MCF 10A (cell line): ENCODE measurements at regions of chr1 and their contacts with region 1.

Region 1: GRCh38 chr1:171801487-171801891 is 20.0 kb downstream of the METTL13 start:
- DNase-seq: peak; percentile 73
- H3K4me3 Mint-ChIP-seq: no peak overlapping the region
- H3K27ac Mint-ChIP-seq: no peak overlapping the region
- H3K4me1 Mint-ChIP-seq: no peaks in the 10 kb centered on the region
- H3K27me3 Mint-ChIP-seq: no peaks in the 10 kb centered on the region
- CTCF ChIP-seq: peak; percentile 88

Region 2: DNA sequence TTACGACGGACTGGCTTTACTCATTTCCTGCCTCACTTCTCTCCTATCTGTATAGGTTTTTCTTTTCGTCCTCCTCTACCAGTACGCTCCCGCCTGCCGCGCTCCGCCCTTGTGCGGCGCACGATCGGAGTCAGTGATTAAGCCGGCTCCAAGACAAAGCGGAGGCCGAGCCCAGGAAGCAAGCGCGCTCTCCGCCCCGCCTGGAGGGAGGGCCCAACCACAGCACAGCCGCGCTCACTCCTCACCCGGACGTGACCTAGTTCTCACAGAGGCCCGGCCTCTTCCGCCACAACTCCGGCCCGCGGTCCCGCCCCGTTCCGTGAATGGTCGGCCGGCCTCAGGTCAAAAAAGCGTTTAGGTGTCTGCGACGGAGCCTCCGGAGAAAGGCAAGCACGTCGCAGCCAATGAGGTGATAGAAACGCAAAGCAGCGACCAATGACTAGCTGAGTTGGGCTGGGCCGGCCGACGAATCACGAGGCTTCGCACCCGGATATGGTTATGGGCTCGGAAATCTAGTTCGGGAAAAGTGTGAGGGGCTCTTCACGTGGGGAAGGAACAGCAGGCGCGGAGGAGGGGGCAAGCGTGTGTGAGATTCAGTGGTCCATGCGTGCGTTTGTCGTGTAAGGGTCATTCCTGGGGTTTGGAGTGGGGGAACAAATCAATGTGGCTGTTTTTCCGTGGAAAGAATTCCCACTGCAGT is 20.2 kb before region 1 on chr1 and contains the start of gene METTL13:
- CTCF ChIA-PET with region 1: interaction called, 79 read pairs
- POLR2A ChIA-PET with region 1: interaction called, 11 read pairs
- intact Hi-C with region 1: no loop called
- DNase-seq: peak; percentile 100
- H3K4me3 Mint-ChIP-seq: peak within 1 kb of the TSS; percentile 84
- H3K27ac Mint-ChIP-seq: peak within 1 kb of the TSS; percentile 95
- H3K4me1 Mint-ChIP-seq: peaks cover 28% of the 10 kb centered on the region
- H3K27me3 Mint-ChIP-seq: no peaks in the 10 kb centered on the region
- CTCF ChIP-seq: no peak
- total RNA-seq, gene METTL13: 30.7 and 39.1 TPM in 2 replicates

Region 3: DNA sequence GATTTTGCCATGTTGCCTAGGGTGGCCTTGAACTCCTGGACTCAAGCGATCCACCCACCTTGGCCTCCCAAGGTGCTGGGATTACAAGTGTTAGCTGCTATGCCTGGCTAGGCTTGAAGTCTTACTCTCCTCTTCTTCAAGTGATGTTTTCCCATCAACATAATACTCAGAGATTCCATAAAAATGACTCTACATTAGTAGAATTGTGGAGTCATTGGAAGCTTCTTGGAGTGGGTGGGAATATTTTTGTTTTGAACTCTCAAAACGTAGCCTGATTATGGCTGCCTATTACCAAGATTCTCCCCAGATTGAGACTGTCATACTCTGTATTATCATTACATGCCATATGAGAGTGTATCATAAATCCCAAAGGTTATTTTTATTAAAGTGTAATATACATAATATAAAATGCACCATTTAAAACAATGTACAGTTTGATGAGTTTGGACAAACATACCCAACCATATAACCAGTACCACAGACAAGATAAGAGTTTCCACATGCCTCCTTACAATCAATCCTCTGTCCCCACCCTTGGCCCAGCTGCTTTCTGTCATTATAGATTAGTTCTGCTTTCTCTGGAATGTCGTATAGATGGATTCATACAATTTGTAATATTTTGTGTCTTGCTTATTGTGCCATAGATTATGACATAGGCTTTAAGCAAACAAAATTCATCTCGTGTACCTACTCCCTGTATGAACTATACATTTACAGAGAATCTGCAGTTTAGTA is 31.8 kb after region 1 on chr1:
- CTCF ChIA-PET with region 1: interaction called, 16 read pairs
- POLR2A ChIA-PET with region 1: no interaction called
- intact Hi-C with region 1: no loop called
- DNase-seq: no peak
- H3K4me3 Mint-ChIP-seq: no peak overlapping the region
- H3K27ac Mint-ChIP-seq: no peak overlapping the region
- H3K4me1 Mint-ChIP-seq: no peaks in the 10 kb centered on the region
- H3K27me3 Mint-ChIP-seq: no peaks in the 10 kb centered on the region
- CTCF ChIP-seq: no peak

Region 4: GRCh38 chr1:171913385-171913784 is 111.9 kb after region 1 on chr1:
- CTCF ChIA-PET with region 1: interaction called, 38 read pairs
- POLR2A ChIA-PET with region 1: interaction called, 3 read pairs
- intact Hi-C with region 1: no loop called
- DNase-seq: peak; percentile 86
- H3K4me3 Mint-ChIP-seq: no peak overlapping the region
- H3K27ac Mint-ChIP-seq: no peak overlapping the region
- H3K4me1 Mint-ChIP-seq: no peaks in the 10 kb centered on the region
- H3K27me3 Mint-ChIP-seq: no peaks in the 10 kb centered on the region
- CTCF ChIP-seq: no peak

Region 5: DNA sequence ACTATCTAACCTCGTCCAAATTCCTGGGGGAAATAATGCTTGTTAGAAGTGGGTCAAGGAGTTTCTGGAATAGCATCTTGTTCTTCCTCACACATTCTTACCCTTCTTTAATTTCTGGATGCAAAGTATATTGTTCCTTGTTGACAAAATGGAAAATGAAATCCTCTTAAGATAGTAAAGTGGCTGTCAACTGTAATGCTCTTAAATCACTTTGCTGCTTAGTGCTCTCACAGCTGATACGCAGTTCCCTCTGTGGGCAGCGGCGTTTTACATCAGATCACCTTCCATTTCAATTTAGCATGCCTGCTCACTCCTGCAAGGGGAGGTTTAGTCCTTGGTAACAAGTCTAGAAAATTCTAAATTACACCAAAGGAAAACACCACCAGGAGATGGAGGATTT is 152.9 kb after region 1 on chr1:
- CTCF ChIA-PET with region 1: interaction called, 18 read pairs
- POLR2A ChIA-PET with region 1: no interaction called
- intact Hi-C with region 1: no loop called
- DNase-seq: no peak
- H3K4me3 Mint-ChIP-seq: no peak overlapping the region
- H3K27ac Mint-ChIP-seq: no peak overlapping the region
- H3K4me1 Mint-ChIP-seq: no peaks in the 10 kb centered on the region
- H3K27me3 Mint-ChIP-seq: peaks cover 15% of the 10 kb centered on the region
- CTCF ChIP-seq: no peak

Region 6: DNA sequence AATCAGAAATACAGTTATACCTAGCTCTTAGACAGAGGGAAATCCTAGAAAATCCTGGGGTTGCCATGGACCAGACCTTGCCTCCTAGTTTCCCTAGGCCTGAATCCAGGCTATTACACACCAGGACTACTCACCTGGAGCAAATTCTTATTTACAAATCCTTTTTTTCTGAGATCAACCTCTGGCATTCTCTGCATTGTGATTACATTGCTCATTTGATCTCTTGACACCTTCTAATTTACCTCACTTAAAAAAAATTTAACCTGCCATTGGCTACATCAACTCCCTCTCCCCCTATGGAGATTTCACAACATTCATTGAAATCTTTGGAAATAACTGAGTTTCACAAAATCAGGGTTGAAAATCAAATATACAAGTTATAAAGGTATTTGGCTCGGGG is 616.1 kb after region 1 on chr1:
- CTCF ChIA-PET with region 1: interaction called, 11 read pairs
- POLR2A ChIA-PET with region 1: no interaction called
- intact Hi-C with region 1: no loop called
- DNase-seq: peak; percentile 30
- H3K4me3 Mint-ChIP-seq: no peak overlapping the region
- H3K27ac Mint-ChIP-seq: no peak overlapping the region
- H3K4me1 Mint-ChIP-seq: peaks cover 7% of the 10 kb centered on the region
- H3K27me3 Mint-ChIP-seq: no peaks in the 10 kb centered on the region
- CTCF ChIP-seq: no peak